ENCODE measurements at regions of chr5 and their contacts with region 1.

Region 1: GRCh38 chr5:149035372-149035790 is 27.5 kb downstream of the SH3TC2 start:
- DNase-seq: peak; percentile 83
- H3K4me3 ChIP-seq: no peak overlapping the region
- H3K27ac ChIP-seq: no peak overlapping the region
- H3K4me1 ChIP-seq: peaks cover 4% of the 10 kb centered on the region
- H3K27me3 ChIP-seq: no peaks in the 10 kb centered on the region
- CTCF ChIP-seq: peak in 2 of 3 experiments; percentile 66 to 78
- POLR2A ChIP-seq: no peak

Region 2: GRCh38 chr5:148730943-148731861 is 304.2 kb before region 1 on chr5:
- intact Hi-C with region 1: loop called (anchors 10 kb)
- DNase-seq: peak; percentile 93
- H3K4me3 ChIP-seq: no peak overlapping the region
- H3K27ac ChIP-seq: no peak overlapping the region
- H3K4me1 ChIP-seq: no peaks in the 10 kb centered on the region
- H3K27me3 ChIP-seq: no peaks in the 10 kb centered on the region
- CTCF ChIP-seq: peak; percentile 94 to 98 (median 97)
- POLR2A ChIP-seq: no peak

Region 3: DNA sequence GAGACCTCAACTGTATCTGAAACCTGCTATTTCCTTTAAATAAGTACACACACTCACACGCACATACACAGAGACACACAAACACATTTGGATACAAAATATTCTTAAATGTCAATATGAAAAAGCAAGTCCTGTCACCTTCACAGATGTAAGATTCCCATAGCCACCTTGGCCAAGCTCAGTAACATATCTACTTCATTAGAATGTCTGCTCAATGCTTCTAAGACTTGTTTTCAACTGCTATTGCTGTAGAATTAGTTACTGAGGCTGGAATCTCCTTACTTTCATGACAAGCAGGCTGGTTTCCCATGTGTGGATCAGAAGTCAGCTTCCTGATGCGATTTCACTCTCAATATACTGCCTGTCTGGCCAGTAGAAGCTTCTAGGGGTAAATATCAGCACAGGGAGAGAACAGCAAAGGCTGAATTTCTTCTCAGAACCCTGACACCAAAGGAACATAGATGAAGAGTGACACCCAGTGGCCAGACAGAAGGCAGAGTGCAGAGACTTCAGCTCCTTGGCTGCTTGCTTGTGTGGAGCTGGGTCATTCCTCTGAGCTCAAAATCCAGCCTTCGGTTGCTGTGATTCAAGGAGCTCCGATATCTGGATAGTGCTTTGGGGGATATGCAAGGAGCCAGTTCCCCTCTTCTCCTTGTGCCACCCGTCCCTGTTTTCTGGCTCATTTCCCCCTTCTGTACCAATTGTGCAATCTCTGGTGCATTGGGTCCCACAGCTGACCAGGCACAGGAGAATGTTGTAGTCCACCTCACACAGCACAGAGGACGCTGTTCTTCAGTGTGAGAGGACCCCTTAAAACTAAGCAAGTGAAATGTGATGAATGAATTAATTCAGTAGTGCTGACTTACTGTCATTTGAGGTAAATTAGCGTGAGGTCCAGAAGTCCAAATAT is 79.3 kb after region 1 on chr5:
- intact Hi-C with region 1: loop called (anchors 10 kb)
- DNase-seq: peak; percentile 79
- H3K4me3 ChIP-seq: no peak overlapping the region
- H3K27ac ChIP-seq: no peak overlapping the region
- H3K4me1 ChIP-seq: no peaks in the 10 kb centered on the region
- H3K27me3 ChIP-seq: no peaks in the 10 kb centered on the region
- CTCF ChIP-seq: peak in 2 of 3 experiments; percentile 48 to 57
- POLR2A ChIP-seq: no peak

Region 4: DNA sequence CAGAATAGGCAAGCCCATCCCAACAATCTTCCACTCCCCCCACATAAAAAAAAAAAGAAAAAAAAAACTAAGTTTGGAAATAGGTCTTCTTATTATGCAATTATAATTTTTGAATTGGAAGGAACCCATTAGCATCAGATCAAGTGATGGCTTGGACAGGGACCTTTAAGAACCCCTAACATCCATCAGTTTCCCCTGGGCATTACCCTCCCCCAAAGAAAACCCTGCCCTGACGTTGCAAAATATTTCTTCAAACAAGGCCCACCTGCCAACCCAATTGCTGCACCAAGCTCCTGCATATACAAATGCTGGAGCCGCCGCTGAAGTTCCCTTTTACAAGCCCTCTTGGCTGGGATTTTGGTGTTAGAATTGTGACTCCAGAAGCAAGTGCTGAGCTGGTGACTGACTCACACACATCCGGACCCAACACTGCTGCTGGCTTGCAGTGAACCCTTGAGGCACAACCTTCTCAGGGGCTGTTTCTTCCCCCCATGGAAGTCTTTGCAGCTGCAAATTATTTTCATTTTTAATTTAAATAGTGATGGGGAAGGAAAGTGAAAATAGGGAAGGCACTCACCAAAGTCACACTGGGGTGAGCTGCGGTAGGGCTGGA is 180.2 kb after region 1 on chr5:
- intact Hi-C with region 1: no loop called
- DNase-seq: no peak
- H3K4me3 ChIP-seq: no peak overlapping the region
- H3K27ac ChIP-seq: no peak overlapping the region
- H3K4me1 ChIP-seq: no peaks in the 10 kb centered on the region
- H3K27me3 ChIP-seq: no peaks in the 10 kb centered on the region
- CTCF ChIP-seq: no peak
- POLR2A ChIP-seq: no peak